Heart left ventricle (tissue), 16 donors: ENCODE measurements at regions of chr16 and their contacts with region 1.

Region 1: GRCh38 chr16:82263521-82264143 is 93.6 kb upstream of the MPHOSPH6 start:
- DNase-seq: peak in 4 of 5 donors; percentile 43 to 53 (median 48)
- ATAC-seq: peak; percentile 79 to 92 (median 88)
- H3K4me3 ChIP-seq: no peak overlapping the region
- H3K27ac ChIP-seq: no peak overlapping the region
- H3K4me1 ChIP-seq: peaks cover 0 to 13% (median 0%) of the 10 kb centered on the region in 12 donors
- H3K27me3 ChIP-seq: no peaks in the 10 kb centered on the region
- CTCF ChIP-seq: peak; percentile 81 to 96 (median 90)
- POLR2A ChIP-seq: no peak

Region 2: GRCh38 chr16:81808933-81809496 is 454.6 kb before region 1 on chr16:
- intact Hi-C with region 1: no loop called
- DNase-seq: no peak
- ATAC-seq: peak in 1 of 4 donors; percentile 22
- H3K4me3 ChIP-seq: no peak overlapping the region
- H3K27ac ChIP-seq: no peak overlapping the region
- H3K4me1 ChIP-seq: peaks cover 0 to 22% (median 0%) of the 10 kb centered on the region in 12 donors
- H3K27me3 ChIP-seq: no peaks in the 10 kb centered on the region
- CTCF ChIP-seq: no peak
- POLR2A ChIP-seq: no peak

Region 3: GRCh38 chr16:82043680-82044584 is 219.7 kb before region 1 on chr16:
- intact Hi-C with region 1: no loop called
- DNase-seq: no peak
- ATAC-seq: no peak
- H3K4me3 ChIP-seq: no peak overlapping the region
- H3K27ac ChIP-seq: no peak overlapping the region
- H3K4me1 ChIP-seq: no peaks in the 10 kb centered on the region
- H3K27me3 ChIP-seq: peaks cover 0 to 22% (median under 1%) of the 10 kb centered on the region in 9 donors
- CTCF ChIP-seq: no peak
- POLR2A ChIP-seq: no peak

Region 4: GRCh38 chr16:82322177-82322576 is 58.5 kb after region 1 on chr16:
- intact Hi-C with region 1: no loop called
- DNase-seq: no peak
- ATAC-seq: no peak
- H3K4me3 ChIP-seq: no peak overlapping the region
- H3K27ac ChIP-seq: no peak overlapping the region
- H3K4me1 ChIP-seq: peaks cover 0 to 11% (median 0%) of the 10 kb centered on the region in 12 donors
- H3K27me3 ChIP-seq: no peaks in the 10 kb centered on the region
- CTCF ChIP-seq: no peak
- POLR2A ChIP-seq: no peak

Region 5: GRCh38 chr16:82344157-82344556 is 80.5 kb after region 1 on chr16:
- intact Hi-C with region 1: loop called (anchors 1 to 5 kb)
- DNase-seq: no peak
- ATAC-seq: peak; percentile 71 to 85 (median 80)
- H3K4me3 ChIP-seq: no peak overlapping the region
- H3K27ac ChIP-seq: no peak overlapping the region
- H3K4me1 ChIP-seq: no peaks in the 10 kb centered on the region
- H3K27me3 ChIP-seq: peaks cover 0 to 5% (median 0%) of the 10 kb centered on the region in 9 donors
- CTCF ChIP-seq: peak; percentile 19 to 63 (median 50)
- POLR2A ChIP-seq: no peak

Region 6: GRCh38 chr16:82368041-82368440 is 104.4 kb after region 1 on chr16:
- intact Hi-C with region 1: no loop called
- DNase-seq: peak in 4 of 5 donors; percentile 65 to 75 (median 68)
- ATAC-seq: peak; percentile 77 to 96 (median 93)
- H3K4me3 ChIP-seq: no peak overlapping the region
- H3K27ac ChIP-seq: no peak overlapping the region
- H3K4me1 ChIP-seq: no peaks in the 10 kb centered on the region
- H3K27me3 ChIP-seq: no peaks in the 10 kb centered on the region
- CTCF ChIP-seq: peak in 11 of 12 donors; percentile 12 to 52 (median 38)
- POLR2A ChIP-seq: no peak

Region 7: DNA sequence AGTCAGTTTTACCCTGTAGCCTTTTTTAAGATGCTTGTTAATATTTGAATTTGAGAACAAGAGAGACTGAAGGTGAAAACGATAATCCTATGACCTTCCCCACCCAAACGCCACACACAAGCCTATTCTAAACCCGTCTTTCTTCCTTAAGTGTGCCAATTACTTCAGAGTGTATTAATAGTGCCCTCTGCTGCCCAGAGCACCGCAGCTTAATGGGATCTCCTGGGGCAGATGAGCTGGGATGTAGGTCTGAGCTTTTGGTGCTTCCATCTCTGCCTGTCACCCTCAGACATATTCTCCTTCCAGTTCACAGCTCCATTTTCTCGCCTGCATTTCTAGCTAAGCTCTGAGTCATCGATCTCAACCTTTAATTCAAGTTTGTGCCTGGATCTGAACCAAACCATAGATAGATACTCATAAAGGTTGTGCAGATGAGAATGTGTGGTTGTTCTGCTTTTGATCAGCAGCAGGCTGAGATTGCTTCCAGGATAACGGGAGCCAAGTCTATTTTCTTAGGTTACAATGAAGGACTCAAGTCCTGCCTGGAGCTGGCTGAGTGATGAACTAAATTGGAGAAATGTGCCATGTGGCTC is 316.8 kb after region 1 on chr16:
- intact Hi-C with region 1: loop called in 8 of 10 experiments (anchors 1 to 10 kb)
- DNase-seq: peak in 1 of 5 donors; percentile 30
- ATAC-seq: peak; percentile 66 to 72 (median 69)
- H3K4me3 ChIP-seq: no peak overlapping the region
- H3K27ac ChIP-seq: no peak overlapping the region
- H3K4me1 ChIP-seq: peaks cover 0 to 11% (median 0%) of the 10 kb centered on the region in 12 donors
- H3K27me3 ChIP-seq: no peaks in the 10 kb centered on the region
- CTCF ChIP-seq: peak; percentile 9 to 59 (median 44)
- POLR2A ChIP-seq: no peak

Region 8: DNA sequence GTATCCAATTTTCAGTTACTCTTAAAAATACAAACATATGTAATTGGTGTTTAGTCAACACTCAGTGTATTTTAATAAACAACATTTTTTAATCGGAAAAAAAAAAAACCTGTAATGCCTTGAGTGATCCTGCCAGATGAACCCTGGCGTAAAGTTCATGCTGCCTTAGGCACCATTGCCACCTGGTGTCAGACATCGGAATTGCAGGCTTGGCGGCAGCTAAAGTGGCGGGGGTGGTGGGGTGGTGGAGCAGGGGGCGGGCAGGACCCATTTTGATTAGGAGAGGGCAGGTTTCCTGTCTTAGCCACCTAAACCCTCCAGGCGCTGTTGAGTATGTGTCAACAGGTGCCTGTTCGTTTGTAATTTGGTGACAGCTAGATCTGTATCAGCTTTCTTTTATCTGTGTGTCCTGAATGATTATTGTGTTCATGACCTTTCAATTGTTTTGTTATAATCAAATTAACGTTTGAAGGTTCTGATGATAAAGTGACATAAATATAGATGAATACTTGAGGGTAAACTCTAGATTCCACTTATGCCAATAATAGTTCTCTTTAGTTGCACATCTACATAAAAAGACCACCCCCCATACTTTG is 951.9 kb after region 1 on chr16:
- intact Hi-C with region 1: loop called in 2 of 10 experiments (anchors 10 kb)
- DNase-seq: no peak
- ATAC-seq: no peak
- H3K4me3 ChIP-seq: no peak overlapping the region
- H3K27ac ChIP-seq: no peak overlapping the region
- H3K4me1 ChIP-seq: peaks cover 0 to 8% (median 0%) of the 10 kb centered on the region in 12 donors
- H3K27me3 ChIP-seq: no peaks in the 10 kb centered on the region
- CTCF ChIP-seq: peak; percentile 32 to 59 (median 49)
- POLR2A ChIP-seq: no peak

Region 9: GRCh38 chr16:83441517-83441916 is 1177.9 kb after region 1 on chr16:
- intact Hi-C with region 1: loop called in 6 of 10 experiments (anchors 5 to 10 kb)
- DNase-seq: no peak
- ATAC-seq: peak in 2 of 4 donors; percentile 60 to 61
- H3K4me3 ChIP-seq: no peak overlapping the region
- H3K27ac ChIP-seq: no peak overlapping the region
- H3K4me1 ChIP-seq: no peaks in the 10 kb centered on the region
- H3K27me3 ChIP-seq: no peaks in the 10 kb centered on the region
- CTCF ChIP-seq: peak in 1 of 12 donors; percentile 12
- POLR2A ChIP-seq: no peak